ENCODE measurements at regions of chr1 and their contacts with region 1.

Region 1: GRCh38 chr1:240608707-240609106 is 3.2 kb downstream of the GREM2 start:
- DNase-seq: peak; percentile 32 to 38
- ATAC-seq: peak; percentile 58 to 73; a peak in 3 of 6 replicates
- H3K4me3 ChIP-seq: no peak overlapping the region
- H3K27ac ChIP-seq: peak overlapping the region in 1 of 2 experiments; percentile 52; a peak in 2 of 6 replicates
- H3K4me1 ChIP-seq: peaks cover 11% of the 10 kb centered on the region; the same call in 1 of the 3 replicates
- CTCF ChIP-seq: peak; percentile 80
- EP300 ChIP-seq: no peak
- POLR2A ChIP-seq: no peak
- RAD21 ChIP-seq: peak; percentile 72 to 78

Region 2: DNA sequence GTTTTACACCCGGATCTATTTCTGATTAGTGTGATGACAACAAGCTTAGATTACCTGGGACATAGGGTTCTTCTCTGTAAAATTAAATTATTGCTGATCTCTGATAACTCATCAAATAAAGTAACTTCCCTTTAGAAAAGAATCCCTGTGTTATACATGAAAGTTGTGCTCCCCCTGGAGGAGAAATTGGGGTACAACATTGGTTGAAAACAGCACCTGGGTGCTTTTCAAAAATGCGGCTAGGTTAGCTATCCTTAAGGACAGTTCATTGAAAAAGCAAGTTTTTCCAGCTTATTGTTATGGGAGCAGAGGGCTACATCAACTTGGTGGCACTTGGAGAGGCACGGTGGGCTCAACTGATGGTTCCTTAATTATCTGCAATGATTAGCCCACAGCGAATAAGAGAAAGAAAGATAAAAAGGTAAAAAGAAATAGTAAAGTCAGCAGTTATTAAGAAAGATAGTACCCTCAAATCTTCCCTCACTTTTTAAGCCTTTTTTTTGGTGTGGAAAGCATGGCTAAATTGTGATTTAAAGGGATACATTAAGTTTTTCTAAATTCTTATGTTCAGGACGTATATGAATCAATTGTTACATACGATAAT is 419.2 kb before region 1 on chr1:
- CTCF ChIA-PET with region 1: interaction called, 10 read pairs
- POLR2A ChIA-PET with region 1: no interaction called
- DNase-seq: peak; percentile 40 to 61
- ATAC-seq: peak in 1 of 2 experiments; percentile 60; a peak in 2 of 6 replicates
- H3K4me3 ChIP-seq: no peak overlapping the region
- H3K27ac ChIP-seq: 0 out of 6 replicates have a peak overlapping the region, but pooled peaks of 1 of the 2 experiments have one; percentile 42
- H3K4me1 ChIP-seq: peaks cover 23% of the 10 kb centered on the region
- CTCF ChIP-seq: peak; percentile 80
- EP300 ChIP-seq: no peak
- POLR2A ChIP-seq: no peak
- RAD21 ChIP-seq: peak; percentile 62 to 65

Region 3: DNA sequence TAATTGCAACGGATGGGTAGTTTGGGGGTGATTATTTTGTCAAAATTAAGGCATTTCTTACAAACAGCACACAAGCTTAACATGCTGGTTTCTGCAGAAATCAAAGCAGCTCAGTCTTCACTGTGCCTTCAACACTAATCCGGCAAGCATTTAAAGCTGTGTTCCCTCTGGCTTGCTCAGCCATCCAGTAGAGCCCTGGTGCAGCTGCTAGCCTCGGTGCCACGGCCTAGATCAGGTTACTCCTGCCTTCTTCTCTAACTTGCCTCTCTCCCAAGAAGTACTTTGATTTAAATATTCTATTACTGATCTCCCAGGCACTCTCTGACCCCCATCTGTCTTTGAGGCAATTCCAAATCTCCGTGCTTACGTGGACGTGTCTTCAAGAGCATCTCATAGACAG is 82.4 kb before region 1 on chr1:
- CTCF ChIA-PET with region 1: no interaction called
- POLR2A ChIA-PET with region 1: no interaction called
- DNase-seq: no peak
- ATAC-seq: no peak
- H3K4me3 ChIP-seq: no peak overlapping the region
- H3K27ac ChIP-seq: no peak overlapping the region
- H3K4me1 ChIP-seq: no peaks in the 10 kb centered on the region
- CTCF ChIP-seq: no peak
- EP300 ChIP-seq: no peak
- POLR2A ChIP-seq: no peak
- RAD21 ChIP-seq: no peak

Region 4: GRCh38 chr1:240597153-240597745 is 11.5 kb before region 1 on chr1:
- CTCF ChIA-PET with region 1: interaction called, 17 read pairs
- POLR2A ChIA-PET with region 1: no interaction called
- DNase-seq: peak in 1 of 2 experiments; percentile 14
- ATAC-seq: peak; percentile 86
- H3K4me3 ChIP-seq: peak overlapping the region; percentile 22
- H3K27ac ChIP-seq: peak overlapping the region; percentile 41 to 73
- H3K4me1 ChIP-seq: peaks cover 16% of the 10 kb centered on the region
- CTCF ChIP-seq: no peak
- EP300 ChIP-seq: no peak
- POLR2A ChIP-seq: no peak
- RAD21 ChIP-seq: no peak

Region 5: GRCh38 chr1:240739139-240739538 is 130.4 kb after region 1 on chr1:
- CTCF ChIA-PET with region 1: no interaction called
- POLR2A ChIA-PET with region 1: no interaction called
- DNase-seq: no peak
- ATAC-seq: no peak
- H3K4me3 ChIP-seq: no peak overlapping the region
- H3K27ac ChIP-seq: no peak overlapping the region
- H3K4me1 ChIP-seq: peaks cover 6% of the 10 kb centered on the region; the same call in 1 of the 3 replicates
- CTCF ChIP-seq: no peak
- EP300 ChIP-seq: no peak
- POLR2A ChIP-seq: no peak
- RAD21 ChIP-seq: no peak

Measured in A549 (cell line).